HEK293 (cell line): ENCODE measurements at regions of chr14 and their contacts with region 1.

Region 1: GRCh38 chr14:95426116-95426475 is 90.4 kb downstream of the SYNE3 start:
- H3K4me3 ChIP-seq: no peak overlapping the region
- H3K27ac ChIP-seq: no peak overlapping the region
- H3K4me1 ChIP-seq: no peaks in the 10 kb centered on the region
- CTCF ChIP-seq: no peak

Region 2: DNA sequence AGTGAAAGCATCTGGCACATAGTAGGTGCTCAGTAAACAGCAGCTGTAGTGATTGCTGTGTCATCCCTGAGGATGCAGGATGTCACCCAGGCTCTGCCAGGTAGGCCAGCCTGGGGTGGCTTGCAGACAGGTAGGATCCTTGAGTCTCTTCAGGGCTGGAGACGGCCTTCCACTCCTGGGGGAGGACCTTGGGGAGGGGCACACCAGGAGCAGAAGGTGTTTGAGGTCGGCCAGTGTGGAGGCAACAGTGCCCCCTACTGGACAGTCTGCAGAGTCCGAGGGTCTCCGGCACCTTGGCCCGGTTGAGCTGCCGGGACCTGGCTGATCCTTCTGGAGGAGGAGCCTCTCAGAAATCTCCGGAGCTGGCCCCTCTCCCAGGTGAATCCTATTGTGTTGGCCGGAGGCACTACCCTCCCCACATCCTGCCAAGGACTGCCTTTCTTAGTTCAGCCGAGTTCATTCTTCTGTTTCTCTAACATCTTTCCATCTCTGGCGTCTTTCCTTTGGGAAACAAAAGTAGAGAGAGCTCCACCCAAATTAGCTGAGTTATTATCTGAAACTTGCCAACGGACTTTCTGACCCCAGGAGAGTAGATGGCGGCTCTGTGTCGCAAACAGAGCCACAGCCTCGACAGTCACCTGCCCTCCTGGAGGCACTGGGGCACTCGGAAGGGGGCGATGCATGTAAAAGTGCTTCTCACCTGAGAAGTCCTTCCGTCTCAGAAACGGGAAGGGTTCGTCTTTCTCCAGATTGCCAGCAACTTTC is 64.5 kb before region 1 on chr14:
- CTCF ChIA-PET with region 1: no interaction called
- POLR2A ChIA-PET with region 1: no interaction called
- H3K4me3 ChIP-seq: no peak overlapping the region
- H3K27ac ChIP-seq: no peak overlapping the region
- H3K4me1 ChIP-seq: peaks cover 4% of the 10 kb centered on the region; the same call in 1 of the 2 replicates
- CTCF ChIP-seq: peak; percentile 47; the same call in 1 of the 2 replicates

Region 3: GRCh38 chr14:95452176-95452892 is 26.2 kb after region 1 on chr14:
- CTCF ChIA-PET with region 1: interaction called, 11 read pairs
- POLR2A ChIA-PET with region 1: no interaction called
- H3K4me3 ChIP-seq: no peak overlapping the region
- H3K27ac ChIP-seq: no peak overlapping the region
- H3K4me1 ChIP-seq: no peaks in the 10 kb centered on the region
- CTCF ChIP-seq: no peak